Activated naive CD8-positive, alpha-beta T cell treated with anti-CD3 and anti-CD28 coated beads, Interleukin-2, amount 10 ng/mL, durations not matched to agents 7 days and 5 days (primary cell): ENCODE measurements at regions of chr17 and their contacts with region 1.

Region 1: GRCh38 chr17:42120770-42121769 is at the start of gene KAT2A:
- DNase-seq: peak; percentile 85
- ATAC-seq: peak; percentile 91
- H3K4me3 Mint-ChIP-seq: peak within 1 kb of the TSS; percentile 71
- H3K27ac Mint-ChIP-seq: peak within 1 kb of the TSS; percentile 58
- H3K4me1 Mint-ChIP-seq: peaks cover 19% of the 10 kb centered on the region
- H3K27me3 Mint-ChIP-seq: no peaks in the 10 kb centered on the region
- total RNA-seq, gene KAT2A: 45.1 to 46.9 TPM

Region 2: GRCh38 chr17:42132941-42133340 is 11.9 kb after region 1 on chr17:
- POLR2A ChIA-PET with region 1: interaction called, 14 read pairs
- DNase-seq: no peak
- ATAC-seq: peak; percentile 59
- H3K4me3 Mint-ChIP-seq: no peak overlapping the region
- H3K27ac Mint-ChIP-seq: peak overlapping the region; percentile 60
- H3K4me1 Mint-ChIP-seq: peaks cover 42% of the 10 kb centered on the region
- H3K27me3 Mint-ChIP-seq: no peaks in the 10 kb centered on the region